ENCODE measurements at regions of chr9 and their contacts with region 1.

Region 1: DNA sequence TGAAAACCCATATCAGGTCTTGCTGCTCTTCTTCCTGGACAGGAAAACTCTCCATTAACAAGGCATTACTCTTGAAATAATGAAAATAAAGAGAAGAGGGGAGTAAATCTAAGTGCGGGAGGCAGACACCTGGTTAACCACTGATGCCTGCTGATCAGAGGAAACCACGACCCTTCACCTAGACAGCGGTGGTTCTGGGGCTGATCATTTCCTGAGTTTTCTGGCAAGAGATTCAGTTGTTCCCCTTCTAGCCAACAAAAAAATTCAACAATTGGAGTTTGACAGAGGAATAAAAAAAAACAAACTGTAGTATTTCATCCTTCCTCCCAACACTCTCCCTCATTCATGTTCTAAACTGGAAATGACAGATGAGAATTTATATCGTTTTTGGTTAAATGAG is 3.0 kb downstream of the RLN2 start:
- DNase-seq: no peak
- H3K4me3 Mint-ChIP-seq: peak overlapping the region; percentile 25
- H3K27ac Mint-ChIP-seq: no peak overlapping the region
- H3K4me1 Mint-ChIP-seq: peaks cover 21% of the 10 kb centered on the region
- H3K27me3 Mint-ChIP-seq: no peaks in the 10 kb centered on the region

Region 2: GRCh38 chr9:5268890-5269715 is 32.4 kb before region 1 on chr9:
- CTCF ChIA-PET with region 1: no interaction called
- POLR2A ChIA-PET with region 1: no interaction called
- intact Hi-C with region 1: no loop called
- DNase-seq: no peak
- H3K4me3 Mint-ChIP-seq: no peak overlapping the region
- H3K27ac Mint-ChIP-seq: no peak overlapping the region
- H3K4me1 Mint-ChIP-seq: peaks cover 8% of the 10 kb centered on the region
- H3K27me3 Mint-ChIP-seq: no peaks in the 10 kb centered on the region

Region 3: DNA sequence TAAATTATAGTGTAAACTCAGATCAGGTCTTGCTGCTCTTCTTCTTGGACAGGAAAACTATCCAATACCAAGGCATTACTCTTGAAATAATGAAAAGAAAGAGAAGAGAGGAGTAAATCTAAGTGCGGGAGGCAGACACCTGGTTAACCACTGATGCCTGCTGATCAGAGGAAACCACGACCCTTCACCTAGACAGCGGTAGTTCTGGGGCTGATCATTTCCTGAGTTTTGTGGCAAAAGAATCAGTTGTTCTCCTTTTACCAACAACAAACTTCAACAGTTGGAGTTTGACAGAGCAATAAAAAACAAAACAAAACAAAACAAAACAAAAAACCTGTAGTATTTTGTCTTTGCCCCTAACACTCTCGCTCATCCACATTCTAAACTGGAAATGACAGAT is 35.1 kb after region 1 on chr9:
- CTCF ChIA-PET with region 1: no interaction called
- POLR2A ChIA-PET with region 1: no interaction called
- intact Hi-C with region 1: loop called (anchors 2 kb)
- DNase-seq: peak; percentile 41
- H3K4me3 Mint-ChIP-seq: peak overlapping the region; percentile 37
- H3K27ac Mint-ChIP-seq: peak overlapping the region; percentile 69
- H3K4me1 Mint-ChIP-seq: peaks cover 41% of the 10 kb centered on the region
- H3K27me3 Mint-ChIP-seq: no peaks in the 10 kb centered on the region